CD4-positive, alpha-beta memory T cell (primary cell): ENCODE measurements at regions of chr7 and their contacts with region 1.

Region 1: GRCh38 chr7:99398625-99399445 is 9.6 kb downstream of the PDAP1 start:
- DNase-seq: no peak
- H3K4me3 ChIP-seq: no peak overlapping the region
- H3K4me3 Mint-ChIP-seq: no peak overlapping the region
- H3K27ac ChIP-seq: no peak overlapping the region
- H3K27ac Mint-ChIP-seq: peak overlapping the region in 6 of 7 donors; percentile 23 to 88 (median 56)
- H3K4me1 ChIP-seq: peaks cover 2% of the 10 kb centered on the region
- H3K4me1 Mint-ChIP-seq: peaks cover 8 to 21% (median 14%) of the 10 kb centered on the region in 4 donors
- H3K27me3 ChIP-seq: no peaks in the 10 kb centered on the region
- H3K27me3 Mint-ChIP-seq: no peaks in the 10 kb centered on the region

Region 2: GRCh38 chr7:99380032-99380822 is 18.6 kb before region 1 on chr7:
- CTCF ChIA-PET with region 1: interaction called, 3 read pairs
- POLR2A ChIA-PET with region 1: interaction called, 55 read pairs
- intact Hi-C with region 1: no loop called
- DNase-seq: peak; percentile 23 to 62 (median 33)
- H3K4me3 ChIP-seq: peak overlapping the region; percentile 64 to 75
- H3K4me3 Mint-ChIP-seq: peak overlapping the region; percentile 69 to 93 (median 87)
- H3K27ac ChIP-seq: peak overlapping the region; percentile 93
- H3K27ac Mint-ChIP-seq: peak overlapping the region; percentile 93 to 99 (median 98)
- H3K4me1 ChIP-seq: peaks cover 90% of the 10 kb centered on the region
- H3K4me1 Mint-ChIP-seq: peaks cover 32 to 77% (median 55%) of the 10 kb centered on the region in 4 donors
- H3K27me3 ChIP-seq: no peaks in the 10 kb centered on the region
- H3K27me3 Mint-ChIP-seq: no peaks in the 10 kb centered on the region